GM10248 (cell line): ENCODE measurements at regions of chr1 and their contacts with region 1.

Region 1: GRCh38 chr1:152459596-152460528 is 45.8 kb upstream of the CRNN start:
- DNase-seq: peak; percentile 81
- CTCF ChIP-seq: peak; percentile 71

Region 2: DNA sequence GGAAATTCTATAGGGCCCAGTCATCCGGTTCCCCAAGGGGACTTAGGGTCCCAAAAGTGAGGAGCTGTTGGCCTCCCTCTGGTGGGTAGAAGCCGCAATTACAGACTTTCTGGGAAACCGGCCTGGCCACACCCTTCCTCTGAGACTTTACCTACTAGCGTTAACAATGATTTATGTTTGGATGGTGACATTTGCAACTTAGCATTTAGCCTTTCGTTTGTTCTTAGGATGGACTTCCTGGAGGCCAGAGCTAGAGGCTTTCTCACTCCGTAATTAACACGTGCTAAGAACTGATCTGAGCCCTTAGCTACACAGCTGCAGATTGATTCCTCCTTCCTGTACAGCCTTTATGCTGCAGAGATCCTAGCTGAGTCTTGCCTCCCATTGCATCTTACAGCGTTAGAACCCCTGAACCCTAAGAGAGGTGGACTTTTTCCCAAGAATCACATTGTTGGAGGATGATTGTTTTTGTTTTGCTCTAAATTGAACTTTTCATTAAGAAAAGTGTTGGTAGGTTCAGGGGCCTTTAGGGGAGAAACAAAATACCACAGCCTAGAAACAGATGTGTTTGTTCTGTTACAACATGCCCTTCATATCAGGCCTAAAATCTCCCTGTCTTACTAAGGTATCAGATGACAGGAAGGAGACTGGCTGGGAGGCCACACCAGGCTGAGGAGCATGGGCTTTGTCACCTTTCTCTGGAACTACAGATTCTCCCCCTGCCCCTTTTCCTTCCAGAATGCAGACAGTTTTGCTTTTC is 425.0 kb before region 1 on chr1:
- CTCF ChIA-PET with region 1: interaction called, 13 read pairs
- POLR2A ChIA-PET with region 1: no interaction called
- DNase-seq: peak; percentile 70
- CTCF ChIP-seq: peak; percentile 36

Region 3: GRCh38 chr1:152141974-152142584 is 317.8 kb before region 1 on chr1:
- CTCF ChIA-PET with region 1: interaction called, 15 read pairs
- POLR2A ChIA-PET with region 1: no interaction called
- DNase-seq: peak; percentile 13
- CTCF ChIP-seq: peak; percentile 42

Region 4: GRCh38 chr1:152198982-152199381 is 260.9 kb before region 1 on chr1:
- CTCF ChIA-PET with region 1: interaction called, 16 read pairs
- POLR2A ChIA-PET with region 1: no interaction called
- DNase-seq: no peak
- CTCF ChIP-seq: no peak

Region 5: GRCh38 chr1:152440635-152441471 is 19.0 kb before region 1 on chr1:
- CTCF ChIA-PET with region 1: interaction called, 70 read pairs
- POLR2A ChIA-PET with region 1: no interaction called
- DNase-seq: peak; percentile 85
- CTCF ChIP-seq: peak; percentile 85

Region 6: DNA sequence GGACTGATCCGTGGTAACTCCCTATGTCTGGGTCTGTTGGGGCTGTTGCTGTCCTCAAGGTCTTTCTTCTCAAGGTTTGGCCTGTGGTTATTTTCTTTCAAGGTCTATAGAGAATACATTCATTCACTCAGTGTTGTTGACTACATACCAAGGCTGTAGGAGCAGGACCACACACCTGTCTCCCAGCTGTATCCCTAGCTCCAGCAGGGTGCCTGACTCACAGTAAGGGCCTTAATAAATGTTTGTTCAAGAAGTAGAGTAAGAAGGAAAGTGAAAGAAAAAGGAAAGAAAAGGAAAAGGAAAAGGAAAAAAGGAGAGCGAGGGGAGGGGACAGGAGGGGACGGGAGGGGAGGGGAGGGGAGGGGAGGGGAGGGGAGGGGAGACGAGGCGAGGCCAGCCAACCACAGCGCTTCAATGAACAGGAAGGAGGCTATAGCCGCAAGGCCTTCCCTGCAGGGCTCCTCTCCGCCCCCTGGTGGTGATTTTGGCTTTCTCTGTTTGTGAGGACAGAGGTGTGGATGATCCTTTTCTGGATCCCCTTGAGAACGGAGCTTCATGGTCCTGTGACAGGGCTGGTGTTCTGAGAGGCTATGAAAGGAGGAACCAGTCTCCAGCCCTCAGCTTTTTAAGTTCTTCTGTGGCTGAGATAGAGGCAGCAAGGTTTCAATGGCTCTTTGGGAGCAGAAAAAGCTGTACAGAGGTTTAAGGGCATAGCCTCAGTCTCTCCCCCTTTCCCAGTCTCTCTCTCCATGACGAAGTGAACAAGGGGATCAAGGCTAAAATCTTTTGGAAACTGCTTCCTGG is 20.1 kb after region 1 on chr1:
- CTCF ChIA-PET with region 1: interaction called, 14 read pairs
- POLR2A ChIA-PET with region 1: no interaction called
- DNase-seq: peak; percentile 43
- CTCF ChIP-seq: peak; percentile 38

Region 7: GRCh38 chr1:152626744-152627143 is 166.9 kb after region 1 on chr1:
- CTCF ChIA-PET with region 1: no interaction called
- POLR2A ChIA-PET with region 1: no interaction called
- DNase-seq: no peak
- CTCF ChIP-seq: no peak